ENCODE measurements at regions of chr20 and their contacts with region 1.

Region 1: GRCh38 chr20:53939572-53940359 is 130.6 kb downstream of the BCAS1 start:
- H3K4me3 Mint-ChIP-seq: peak overlapping the region; percentile 9
- H3K27ac Mint-ChIP-seq: peak overlapping the region; percentile 82
- H3K4me1 Mint-ChIP-seq: peaks cover 76% of the 10 kb centered on the region
- H3K27me3 Mint-ChIP-seq: no peaks in the 10 kb centered on the region

Region 2: GRCh38 chr20:53869466-53870258 is 70.1 kb before region 1 on chr20:
- intact Hi-C with region 1: loop called (anchors 5 kb)
- H3K4me3 Mint-ChIP-seq: no peak overlapping the region
- H3K27ac Mint-ChIP-seq: peak overlapping the region; percentile 74
- H3K4me1 Mint-ChIP-seq: peaks cover 49% of the 10 kb centered on the region
- H3K27me3 Mint-ChIP-seq: no peaks in the 10 kb centered on the region

Region 3: GRCh38 chr20:54062812-54063280 is 123.1 kb after region 1 on chr20:
- intact Hi-C with region 1: loop called (anchors 1 kb)
- H3K4me3 Mint-ChIP-seq: no peak overlapping the region
- H3K27ac Mint-ChIP-seq: no peak overlapping the region
- H3K4me1 Mint-ChIP-seq: peaks cover 7% of the 10 kb centered on the region
- H3K27me3 Mint-ChIP-seq: no peaks in the 10 kb centered on the region

Region 4: GRCh38 chr20:54199721-54200176 is 260.0 kb after region 1 on chr20:
- intact Hi-C with region 1: loop called (anchors 5 kb)
- H3K4me3 Mint-ChIP-seq: no peak overlapping the region
- H3K27ac Mint-ChIP-seq: no peak overlapping the region
- H3K4me1 Mint-ChIP-seq: peaks cover 36% of the 10 kb centered on the region
- H3K27me3 Mint-ChIP-seq: no peaks in the 10 kb centered on the region